Activated CD4-positive, alpha-beta T cell treated with anti-CD3 and anti-CD28 coated beads, Interleukin-2, amount 10 ng/mL, durations not matched to agents 24 days and 14 days (primary cell): ENCODE measurements at regions of chrX and their contacts with region 1.

Region 1: GRCh38 chrX:68504237-68504636 is 5.4 kb downstream of the YIPF6 start:
- DNase-seq: peak; percentile 75
- H3K4me3 Mint-ChIP-seq: no peak overlapping the region
- H3K27ac Mint-ChIP-seq: peak overlapping the region; percentile 81
- H3K4me1 Mint-ChIP-seq: peaks cover 38% of the 10 kb centered on the region
- H3K27me3 Mint-ChIP-seq: no peaks in the 10 kb centered on the region

Region 2: GRCh38 chrX:68183612-68184214 is 320.5 kb before region 1 on chrX:
- intact Hi-C with region 1: loop called (anchors 10 kb)
- DNase-seq: peak; percentile 51
- H3K4me3 Mint-ChIP-seq: no peak overlapping the region
- H3K27ac Mint-ChIP-seq: no peak overlapping the region
- H3K4me1 Mint-ChIP-seq: peaks cover 7% of the 10 kb centered on the region
- H3K27me3 Mint-ChIP-seq: no peaks in the 10 kb centered on the region

Region 3: GRCh38 chrX:68462653-68463052 is 41.6 kb before region 1 on chrX:
- intact Hi-C with region 1: no loop called
- DNase-seq: peak; percentile 60
- H3K4me3 Mint-ChIP-seq: no peak overlapping the region
- H3K27ac Mint-ChIP-seq: no peak overlapping the region
- H3K4me1 Mint-ChIP-seq: no peaks in the 10 kb centered on the region
- H3K27me3 Mint-ChIP-seq: no peaks in the 10 kb centered on the region

Region 4: DNA sequence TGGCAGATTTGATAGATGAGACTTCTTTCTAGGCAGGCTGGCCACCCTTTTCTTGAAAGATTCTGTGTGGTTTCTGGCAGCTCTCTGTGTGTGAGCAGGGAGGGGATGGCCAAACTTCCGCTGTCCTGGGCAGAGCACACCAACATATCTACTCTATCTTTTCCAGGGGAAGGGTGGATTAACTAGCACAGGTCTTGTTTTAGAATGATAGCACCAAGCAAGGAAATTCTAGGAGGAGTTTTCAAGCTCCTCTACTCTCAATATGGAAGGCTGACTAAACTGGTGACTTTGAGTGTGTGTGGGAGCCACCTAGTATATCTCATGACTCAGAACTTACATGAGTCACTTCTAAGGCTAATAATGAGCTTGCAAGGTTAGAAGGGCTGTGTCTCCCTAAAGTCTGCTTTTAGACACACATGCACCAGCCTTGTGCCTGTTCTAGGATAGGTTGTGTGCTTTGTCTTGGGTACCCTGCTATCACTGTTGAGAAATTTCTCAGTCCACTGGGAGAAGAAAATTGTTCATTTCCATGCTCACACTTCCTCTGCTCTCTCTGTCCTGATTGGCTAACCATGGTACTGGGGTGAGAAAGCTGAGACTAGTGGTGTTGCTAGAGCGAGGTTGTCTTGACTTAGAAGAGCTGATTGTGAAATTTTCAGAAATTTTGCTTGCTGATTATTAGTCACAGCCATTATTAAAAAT is 67.5 kb after region 1 on chrX:
- intact Hi-C with region 1: loop called (anchors 5 kb)
- DNase-seq: no peak
- H3K4me3 Mint-ChIP-seq: no peak overlapping the region
- H3K27ac Mint-ChIP-seq: peak overlapping the region; percentile 31
- H3K4me1 Mint-ChIP-seq: peaks cover 13% of the 10 kb centered on the region
- H3K27me3 Mint-ChIP-seq: no peaks in the 10 kb centered on the region

Region 5: GRCh38 chrX:68693481-68694434 is 189.5 kb after region 1 on chrX:
- intact Hi-C with region 1: loop called (anchors 5 kb)
- DNase-seq: peak; percentile 67
- H3K4me3 Mint-ChIP-seq: peak overlapping the region; percentile 79
- H3K27ac Mint-ChIP-seq: peak overlapping the region; percentile 58
- H3K4me1 Mint-ChIP-seq: peaks cover 28% of the 10 kb centered on the region
- H3K27me3 Mint-ChIP-seq: no peaks in the 10 kb centered on the region

Region 6: GRCh38 chrX:68828740-68829552 is 324.7 kb after region 1 on chrX and contains the start of gene EFNB1:
- intact Hi-C with region 1: loop called (anchors 5 kb)
- DNase-seq: peak; percentile 95
- H3K4me3 Mint-ChIP-seq: peak within 1 kb of the TSS; percentile 90
- H3K27ac Mint-ChIP-seq: peak within 1 kb of the TSS; percentile 71
- H3K4me1 Mint-ChIP-seq: peaks cover 14% of the 10 kb centered on the region
- H3K27me3 Mint-ChIP-seq: peaks cover 6% of the 10 kb centered on the region
- total RNA-seq, gene EFNB1: 6.3 and 7.1 TPM in 2 replicates

Region 7: GRCh38 chrX:69165087-69165651 is 660.9 kb after region 1 on chrX and contains the start of gene PJA1:
- intact Hi-C with region 1: loop called (anchors 5 kb)
- DNase-seq: peak; percentile 89
- H3K4me3 Mint-ChIP-seq: peak within 1 kb of the TSS; percentile 84
- H3K27ac Mint-ChIP-seq: peak within 1 kb of the TSS; percentile 82
- H3K4me1 Mint-ChIP-seq: peaks cover 21% of the 10 kb centered on the region
- H3K27me3 Mint-ChIP-seq: peaks cover 7% of the 10 kb centered on the region
- total RNA-seq, gene PJA1: 14.4 and 15.5 TPM in 2 replicates